CD14-positive monocyte (primary cell): ENCODE measurements at regions of chr10 and their contacts with region 1.

Region 1: DNA sequence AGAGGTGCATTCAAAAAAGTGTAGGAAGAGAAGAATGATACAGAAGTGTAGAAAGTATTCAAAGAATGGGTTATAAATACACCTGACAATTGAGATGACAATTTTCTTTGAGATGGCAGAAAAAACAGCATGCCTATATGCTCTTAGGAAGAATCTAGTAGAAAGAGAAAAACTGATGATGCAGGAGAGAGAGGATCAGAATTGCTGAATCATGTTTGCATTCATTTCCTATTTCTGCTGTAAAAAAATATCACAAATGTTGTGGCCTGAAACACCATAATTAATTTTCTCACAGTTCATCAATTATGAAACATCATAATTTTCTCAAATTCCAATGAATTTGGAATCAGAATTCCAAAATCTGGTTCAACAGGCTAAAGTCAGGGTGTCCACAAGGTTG is 9.8 kb upstream of the AKR1C1 start:
- DNase-seq: no peak
- H3K4me3 ChIP-seq: no peak overlapping the region
- H3K4me3 Mint-ChIP-seq: no peak overlapping the region
- H3K27ac ChIP-seq: no peak overlapping the region
- H3K27ac Mint-ChIP-seq: no peak overlapping the region
- H3K4me1 ChIP-seq: no peaks in the 10 kb centered on the region
- H3K4me1 Mint-ChIP-seq: no peaks in the 10 kb centered on the region
- H3K27me3 ChIP-seq: no peaks in the 10 kb centered on the region
- H3K27me3 Mint-ChIP-seq: peaks cover 0 to 2% (median 0%) of the 10 kb centered on the region in 3 donors
- CTCF ChIP-seq: no peak

Region 2: DNA sequence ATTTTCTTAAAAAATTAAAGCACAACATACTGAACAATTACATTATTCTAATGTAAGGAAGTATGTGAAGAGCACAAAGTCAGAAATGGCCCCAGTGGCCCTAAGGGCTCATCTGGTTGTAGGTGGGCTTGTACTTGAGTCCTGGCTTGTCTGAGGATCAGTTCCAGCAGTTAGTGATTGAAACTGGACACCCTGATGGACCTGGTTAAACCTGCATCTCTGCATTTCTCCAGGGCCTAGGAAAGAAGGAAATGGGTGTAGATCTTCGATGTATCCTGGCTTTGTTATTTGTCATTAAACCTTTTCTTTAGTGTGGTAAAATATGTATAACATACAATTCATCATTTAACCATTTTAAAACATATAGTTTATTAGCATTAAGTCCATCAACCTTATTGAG is 60.0 kb after region 1 on chr10:
- intact Hi-C with region 1: loop called in 1 of 2 experiments (anchors 5 kb)
- DNase-seq: no peak
- H3K4me3 ChIP-seq: no peak overlapping the region
- H3K4me3 Mint-ChIP-seq: no peak overlapping the region
- H3K27ac ChIP-seq: no peak overlapping the region
- H3K27ac Mint-ChIP-seq: no peak overlapping the region
- H3K4me1 ChIP-seq: no peaks in the 10 kb centered on the region
- H3K4me1 Mint-ChIP-seq: no peaks in the 10 kb centered on the region
- H3K27me3 ChIP-seq: no peaks in the 10 kb centered on the region
- H3K27me3 Mint-ChIP-seq: no peaks in the 10 kb centered on the region
- CTCF ChIP-seq: no peak

Region 3: DNA sequence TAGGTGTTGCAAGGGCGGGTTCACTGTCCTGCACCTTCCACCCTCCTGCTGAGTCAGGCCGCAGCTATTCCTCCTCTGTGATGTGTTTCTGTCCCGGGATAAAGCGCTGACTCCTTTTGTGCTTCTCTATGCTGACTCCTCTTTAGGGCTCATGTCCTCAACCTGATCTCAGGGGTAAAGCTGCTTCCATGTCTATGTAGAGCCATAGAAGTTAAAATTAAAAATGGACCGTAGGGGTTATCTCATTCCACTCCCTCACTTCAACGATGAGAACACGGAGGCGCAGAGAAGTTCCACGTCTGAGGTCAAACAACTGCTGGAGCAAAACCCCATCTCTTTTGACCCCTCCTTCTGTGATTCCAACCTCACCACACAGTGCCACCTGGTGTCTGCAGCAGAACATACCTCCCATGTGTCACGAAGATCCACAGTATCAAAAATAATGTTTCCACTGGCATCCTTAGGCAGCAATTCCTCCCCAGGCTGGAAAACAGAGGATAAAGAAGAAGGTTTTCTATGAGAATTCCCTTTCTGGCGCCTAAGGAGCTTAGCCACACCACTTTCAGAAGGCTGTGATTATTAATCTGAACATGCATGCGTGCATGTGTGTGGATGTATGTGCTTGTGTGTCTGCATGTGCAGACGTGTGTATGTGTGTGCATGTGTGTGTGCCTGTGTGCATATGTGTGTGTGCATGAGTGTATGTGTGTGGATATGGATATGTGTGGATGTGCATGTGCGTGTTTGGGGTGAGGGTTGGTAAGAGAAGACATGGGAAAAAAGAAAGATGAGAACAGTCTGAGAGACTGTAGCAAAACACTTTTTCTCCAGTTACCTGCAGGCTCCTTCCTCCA is 330.1 kb after region 1 on chr10:
- intact Hi-C with region 1: no loop called
- DNase-seq: peak; percentile 70 to 82 (median 75)
- H3K4me3 ChIP-seq: peak overlapping the region in 1 of 3 experiments; percentile 38
- H3K4me3 Mint-ChIP-seq: peak overlapping the region; percentile 40 to 82
- H3K27ac ChIP-seq: peak overlapping the region; percentile 69 to 93
- H3K27ac Mint-ChIP-seq: peak overlapping the region; percentile 92 to 99 (median 96)
- H3K4me1 ChIP-seq: peaks cover 28 to 31% of the 10 kb centered on the region in 2 donors
- H3K4me1 Mint-ChIP-seq: peaks cover 32% of the 10 kb centered on the region
- H3K27me3 ChIP-seq: no peaks in the 10 kb centered on the region
- H3K27me3 Mint-ChIP-seq: peaks cover 0 to 4% (median 0%) of the 10 kb centered on the region in 3 donors
- CTCF ChIP-seq: peak; percentile 84